Right ventricle myocardium inferior (tissue), 1 donor: ENCODE measurements at regions of chr3 and their contacts with region 1.

Region 1: GRCh38 chr3:147654827-147655226 is 245.7 kb downstream of the ZIC1 start:
- DNase-seq: no peak
- ATAC-seq: no peak

Region 2: DNA sequence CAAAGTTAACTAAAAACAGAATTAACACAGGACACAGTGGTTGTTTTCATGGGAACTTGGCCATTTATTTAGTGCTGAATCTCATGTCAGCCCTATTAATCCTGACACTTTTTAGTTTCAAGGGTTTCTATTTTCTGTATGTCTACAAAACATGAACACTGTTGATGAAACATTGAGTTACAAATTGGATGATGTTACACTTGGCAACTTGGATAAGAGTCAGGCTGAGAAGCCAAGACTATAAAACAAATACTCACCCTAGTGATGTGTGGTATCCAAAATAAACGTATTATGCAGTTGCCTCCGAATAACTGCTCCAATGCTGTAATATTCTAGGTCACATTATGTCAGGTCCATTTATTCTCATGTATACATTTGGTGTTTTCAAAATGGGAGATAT is 103.9 kb after region 1 on chr3:
- intact Hi-C with region 1: loop called (anchors 10 kb)
- DNase-seq: no peak
- ATAC-seq: peak; percentile 91